Aorta (tissue), 5 donors: ENCODE measurements at regions of chrX and their contacts with region 1.

Region 1: GRCh38 chrX:132622130-132622529 is 133.3 kb upstream of the MBNL3 start:
- DNase-seq: no peak
- ATAC-seq: no peak
- H3K4me3 ChIP-seq: no peak overlapping the region
- H3K27ac ChIP-seq: no peak overlapping the region
- H3K4me1 ChIP-seq: no peaks in the 10 kb centered on the region
- H3K27me3 ChIP-seq: peaks cover 0 to 3% of the 10 kb centered on the region in 2 donors

Region 2: DNA sequence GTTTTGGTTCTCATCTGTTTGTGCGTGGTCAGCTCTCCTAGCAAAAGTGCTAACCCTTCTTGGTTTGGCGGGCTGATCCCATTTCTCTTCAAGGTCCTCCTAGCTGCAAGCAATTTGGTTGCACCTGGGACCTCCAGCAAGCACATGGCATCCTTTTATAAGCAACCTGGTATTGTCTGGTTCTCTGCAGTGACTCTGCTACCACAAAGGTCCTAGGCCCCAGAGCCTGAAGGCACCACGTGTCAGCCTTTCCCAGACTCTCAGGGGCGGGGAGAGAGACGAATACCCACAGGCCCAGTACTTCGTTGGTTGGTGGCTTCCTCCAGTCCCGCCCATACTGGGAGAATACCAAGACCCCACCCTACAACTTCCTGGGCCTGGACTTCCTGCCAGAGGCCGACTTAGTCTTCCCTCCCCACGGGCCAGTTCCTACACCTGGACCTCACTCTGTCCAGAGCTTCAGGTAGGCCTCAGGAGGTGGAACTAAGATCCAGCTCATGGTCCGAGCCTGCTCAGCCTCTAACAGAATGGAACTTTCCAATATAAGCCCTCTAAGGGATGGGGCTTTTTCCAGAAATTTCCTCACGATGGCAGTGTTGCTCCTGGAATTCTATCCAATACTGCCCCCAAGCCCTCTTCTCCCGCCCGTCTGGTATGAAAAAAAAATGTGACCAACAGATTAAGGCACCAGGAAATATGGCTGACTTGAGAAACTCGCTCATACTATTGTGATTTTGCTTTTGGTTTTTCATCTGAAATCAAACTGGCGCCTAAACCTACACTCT is 791.5 kb before region 1 on chrX:
- intact Hi-C with region 1: loop called in 1 of 2 experiments (anchors 10 kb)
- DNase-seq: peak in 1 of 2 donors; percentile 78
- ATAC-seq: peak; percentile 92
- H3K4me3 ChIP-seq: no peak overlapping the region
- H3K27ac ChIP-seq: no peak overlapping the region
- H3K4me1 ChIP-seq: no peaks in the 10 kb centered on the region
- H3K27me3 ChIP-seq: no peaks in the 10 kb centered on the region

Region 3: DNA sequence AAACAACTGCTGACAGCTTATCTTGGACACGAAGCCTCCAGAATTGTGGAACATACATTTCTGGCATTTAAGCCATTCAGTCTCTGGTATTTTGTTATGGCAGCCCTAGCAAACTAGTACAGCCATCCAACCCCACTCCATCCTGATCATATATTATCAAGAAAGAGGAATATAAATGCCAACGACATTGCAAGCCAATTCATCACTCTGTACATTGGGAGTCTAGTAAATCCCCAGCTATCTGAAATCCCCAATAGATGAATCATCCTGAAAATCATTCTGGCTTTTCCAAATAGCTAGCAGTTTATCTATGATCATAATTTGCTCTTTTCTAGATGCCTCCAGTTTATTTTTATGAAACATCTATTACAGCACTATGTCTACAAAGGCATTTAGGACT is 535.5 kb before region 1 on chrX:
- intact Hi-C with region 1: loop called in 1 of 2 experiments (anchors 10 kb)
- DNase-seq: no peak
- ATAC-seq: no peak
- H3K4me3 ChIP-seq: no peak overlapping the region
- H3K27ac ChIP-seq: no peak overlapping the region
- H3K4me1 ChIP-seq: no peaks in the 10 kb centered on the region
- H3K27me3 ChIP-seq: no peaks in the 10 kb centered on the region

Region 4: GRCh38 chrX:132664269-132664668 is 42.1 kb after region 1 on chrX:
- intact Hi-C with region 1: no loop called
- DNase-seq: no peak
- ATAC-seq: no peak
- H3K4me3 ChIP-seq: no peak overlapping the region
- H3K27ac ChIP-seq: no peak overlapping the region
- H3K4me1 ChIP-seq: no peaks in the 10 kb centered on the region
- H3K27me3 ChIP-seq: no peaks in the 10 kb centered on the region